Activated naive CD4-positive, alpha-beta T cell treated with anti-CD3 and anti-CD28 coated beads for 36 hours (primary cell): ENCODE measurements at regions of chr22 and their contacts with region 1.

Region 1: GRCh38 chr22:26428515-26429457 is at the start of gene ASPHD2:
- DNase-seq: peak; percentile 83
- H3K4me3 Mint-ChIP-seq: peak within 1 kb of the TSS; percentile 94
- H3K27ac Mint-ChIP-seq: peak within 1 kb of the TSS; percentile 99
- H3K4me1 Mint-ChIP-seq: peaks cover 51% of the 10 kb centered on the region
- H3K27me3 Mint-ChIP-seq: peaks cover 4% of the 10 kb centered on the region
- total RNA-seq, gene ASPHD2: 4.4 to 4.7 TPM

Region 2: GRCh38 chr22:26295563-26296126 is 133.1 kb before region 1 on chr22:
- CTCF ChIA-PET with region 1: no interaction called
- intact Hi-C with region 1: loop called (anchors 1 kb)
- DNase-seq: no peak
- H3K4me3 Mint-ChIP-seq: no peak overlapping the region
- H3K27ac Mint-ChIP-seq: peak overlapping the region; percentile 19
- H3K4me1 Mint-ChIP-seq: peaks cover 16% of the 10 kb centered on the region
- H3K27me3 Mint-ChIP-seq: no peaks in the 10 kb centered on the region

Region 3: DNA sequence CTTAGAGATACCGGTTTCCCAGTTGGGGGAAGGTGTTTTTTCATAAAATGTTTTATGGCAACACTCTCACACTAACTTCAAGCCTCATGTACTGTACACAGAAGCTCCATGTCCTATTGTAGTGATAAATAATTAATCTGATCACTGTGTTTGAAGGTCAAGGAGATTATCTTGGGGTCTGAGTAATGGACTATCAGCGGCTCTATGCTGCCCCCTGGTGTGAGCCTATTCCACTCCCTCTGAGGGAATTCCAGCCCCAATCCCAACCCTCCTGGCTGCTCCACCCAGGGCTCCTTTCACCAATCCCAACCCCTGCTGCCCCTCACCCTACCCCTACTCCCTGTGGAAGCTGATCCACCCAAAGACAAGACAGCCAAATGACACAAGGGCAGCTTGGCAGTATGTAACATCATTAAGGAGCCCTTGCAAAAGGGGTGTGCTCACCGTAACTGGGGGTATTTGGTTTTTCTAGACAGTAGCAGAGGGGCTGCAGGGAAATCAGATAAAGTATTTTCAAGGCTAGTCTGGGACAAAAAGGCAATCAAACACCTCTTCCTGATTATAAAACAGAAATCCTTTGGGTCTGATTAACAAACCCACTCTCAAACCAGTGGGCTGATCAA is 32.5 kb after region 1 on chr22:
- CTCF ChIA-PET with region 1: interaction called, 8 read pairs
- intact Hi-C with region 1: loop called (anchors 5 kb)
- DNase-seq: peak; percentile 57
- H3K4me3 Mint-ChIP-seq: no peak overlapping the region
- H3K27ac Mint-ChIP-seq: no peak overlapping the region
- H3K4me1 Mint-ChIP-seq: no peaks in the 10 kb centered on the region
- H3K27me3 Mint-ChIP-seq: no peaks in the 10 kb centered on the region

Region 4: DNA sequence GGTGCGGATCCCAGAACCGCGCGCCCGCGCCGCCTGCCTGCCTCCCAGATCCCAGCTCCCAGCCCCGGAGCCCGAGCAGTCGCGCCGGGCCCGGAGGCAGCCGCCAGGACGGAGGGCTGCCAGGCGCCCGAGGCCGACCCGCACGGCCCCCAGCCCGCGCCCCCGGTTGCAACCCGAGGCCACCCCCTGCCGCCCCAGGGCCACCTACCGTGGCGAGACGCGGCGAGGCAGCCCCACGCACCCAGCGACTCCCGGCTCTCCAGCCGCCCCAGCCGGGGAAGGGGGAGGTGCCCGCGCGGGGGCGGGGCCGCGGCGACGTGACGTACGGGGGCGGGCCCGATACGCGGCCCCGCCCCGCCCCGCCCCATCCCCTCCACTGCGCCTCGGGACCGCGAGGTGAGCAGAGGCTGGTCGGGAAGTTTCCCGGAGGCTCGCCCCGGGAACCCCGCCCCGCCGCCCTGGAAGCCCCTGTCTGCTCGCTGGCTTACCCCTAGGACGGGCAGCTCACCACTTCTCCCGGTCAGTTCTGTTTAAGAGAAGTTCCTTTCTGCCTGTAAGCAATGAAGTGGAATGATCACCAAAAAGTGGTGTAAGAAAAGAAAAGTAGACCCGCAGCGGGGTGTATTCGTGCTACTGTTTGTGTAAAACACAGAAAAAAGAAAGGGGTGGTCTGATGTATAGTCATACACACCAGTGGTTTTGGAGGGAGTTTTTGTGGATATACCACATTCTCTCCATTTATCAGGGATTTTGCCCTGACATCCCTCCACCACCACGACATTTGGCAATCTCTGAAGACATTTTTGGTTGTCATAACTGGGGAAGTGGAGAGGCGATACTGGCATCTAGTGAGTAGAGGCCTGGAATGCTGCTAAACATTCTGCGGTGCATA is 161.3 kb after region 1 on chr22 and contains the start of gene TPST2:
- CTCF ChIA-PET with region 1: no interaction called
- intact Hi-C with region 1: loop called (anchors 1 kb)
- DNase-seq: peak; percentile 72
- H3K4me3 Mint-ChIP-seq: peak within 1 kb of the TSS; percentile 85
- H3K27ac Mint-ChIP-seq: peak within 1 kb of the TSS; percentile 67
- H3K4me1 Mint-ChIP-seq: peaks cover 49% of the 10 kb centered on the region
- H3K27me3 Mint-ChIP-seq: no peaks in the 10 kb centered on the region
- total RNA-seq, gene TPST2: 21.0 to 21.9 TPM

Region 5: GRCh38 chr22:26632422-26633155 is 203.8 kb after region 1 on chr22:
- CTCF ChIA-PET with region 1: no interaction called
- intact Hi-C with region 1: no loop called
- DNase-seq: no peak
- H3K4me3 Mint-ChIP-seq: no peak overlapping the region
- H3K27ac Mint-ChIP-seq: no peak overlapping the region
- H3K4me1 Mint-ChIP-seq: peaks cover under 1% of the 10 kb centered on the region
- H3K27me3 Mint-ChIP-seq: no peaks in the 10 kb centered on the region

Region 6: DNA sequence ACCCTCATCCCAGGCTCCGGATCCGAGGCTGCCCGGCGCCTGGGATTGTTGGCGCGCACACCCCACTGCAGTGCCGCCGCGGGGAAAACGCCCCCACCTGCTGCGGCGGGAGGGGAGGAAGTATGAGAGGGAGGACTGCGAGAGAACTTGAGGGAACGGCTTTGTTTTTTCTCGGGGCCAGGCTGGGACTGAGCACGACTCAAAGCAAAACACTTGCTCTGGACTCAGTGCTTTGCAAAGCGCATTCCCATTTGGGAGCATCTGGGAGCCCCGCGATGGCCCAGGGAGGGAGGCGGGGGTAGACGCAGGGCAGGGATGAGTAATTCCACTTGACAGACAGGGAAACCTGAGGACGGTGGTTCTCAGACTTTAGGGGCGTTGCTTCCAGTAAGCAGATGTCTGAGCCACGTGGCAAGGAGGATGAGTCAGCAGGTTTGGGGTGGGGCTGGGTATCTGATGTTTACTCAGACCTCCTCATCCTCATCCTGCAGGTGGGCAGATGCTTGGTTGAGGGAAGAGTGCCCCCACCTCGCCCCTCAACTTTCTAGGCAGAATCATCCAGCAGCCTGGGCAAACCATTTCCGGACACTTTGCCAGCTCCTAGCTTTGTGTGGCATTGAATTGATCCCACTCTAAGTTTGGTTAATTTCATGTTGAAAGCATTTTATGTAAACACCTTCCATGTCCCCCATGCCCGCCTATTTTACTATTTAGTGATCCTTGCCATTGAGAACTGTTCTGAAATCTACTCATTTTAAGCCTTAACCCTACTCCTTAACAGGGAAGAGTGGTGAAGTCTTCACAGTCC is 230.1 kb after region 1 on chr22:
- CTCF ChIA-PET with region 1: no interaction called
- intact Hi-C with region 1: loop called (anchors 2 kb)
- DNase-seq: peak; percentile 95
- H3K4me3 Mint-ChIP-seq: peak overlapping the region; percentile 90
- H3K27ac Mint-ChIP-seq: peak overlapping the region; percentile 80
- H3K4me1 Mint-ChIP-seq: peaks cover 26% of the 10 kb centered on the region
- H3K27me3 Mint-ChIP-seq: peaks cover 2% of the 10 kb centered on the region